Tibial artery (tissue), 4 donors: ENCODE measurements at regions of chr1 and their contacts with region 1.

Region 1: GRCh38 chr1:167721617-167722151 is at the start of gene MPZL1:
- DNase-seq: peak; percentile 96 to 98
- H3K4me3 ChIP-seq: peak within 1 kb of the TSS; percentile 79 to 84
- H3K27ac ChIP-seq: peak within 1 kb of the TSS; percentile 87
- H3K4me1 ChIP-seq: peaks cover 0 to 39% (median 13%) of the 10 kb centered on the region in 4 donors
- H3K27me3 ChIP-seq: no peaks in the 10 kb centered on the region
- CTCF ChIP-seq: no peak

Region 2: GRCh38 chr1:167687919-167688519 is 33.7 kb before region 1 on chr1:
- intact Hi-C with region 1: no loop called
- DNase-seq: peak in 1 of 2 donors; percentile 80
- H3K4me3 ChIP-seq: no peak overlapping the region
- H3K27ac ChIP-seq: no peak overlapping the region
- H3K4me1 ChIP-seq: peaks cover 0 to 35% (median 21%) of the 10 kb centered on the region in 4 donors
- H3K27me3 ChIP-seq: no peaks in the 10 kb centered on the region
- CTCF ChIP-seq: peak; percentile 87 to 91

Region 3: GRCh38 chr1:167737169-167737568 is 15.5 kb after region 1 on chr1:
- intact Hi-C with region 1: no loop called
- DNase-seq: no peak
- H3K4me3 ChIP-seq: no peak overlapping the region
- H3K27ac ChIP-seq: no peak overlapping the region
- H3K4me1 ChIP-seq: peaks cover 0 to 7% (median 3%) of the 10 kb centered on the region in 4 donors
- H3K27me3 ChIP-seq: no peaks in the 10 kb centered on the region
- CTCF ChIP-seq: no peak

Region 4: DNA sequence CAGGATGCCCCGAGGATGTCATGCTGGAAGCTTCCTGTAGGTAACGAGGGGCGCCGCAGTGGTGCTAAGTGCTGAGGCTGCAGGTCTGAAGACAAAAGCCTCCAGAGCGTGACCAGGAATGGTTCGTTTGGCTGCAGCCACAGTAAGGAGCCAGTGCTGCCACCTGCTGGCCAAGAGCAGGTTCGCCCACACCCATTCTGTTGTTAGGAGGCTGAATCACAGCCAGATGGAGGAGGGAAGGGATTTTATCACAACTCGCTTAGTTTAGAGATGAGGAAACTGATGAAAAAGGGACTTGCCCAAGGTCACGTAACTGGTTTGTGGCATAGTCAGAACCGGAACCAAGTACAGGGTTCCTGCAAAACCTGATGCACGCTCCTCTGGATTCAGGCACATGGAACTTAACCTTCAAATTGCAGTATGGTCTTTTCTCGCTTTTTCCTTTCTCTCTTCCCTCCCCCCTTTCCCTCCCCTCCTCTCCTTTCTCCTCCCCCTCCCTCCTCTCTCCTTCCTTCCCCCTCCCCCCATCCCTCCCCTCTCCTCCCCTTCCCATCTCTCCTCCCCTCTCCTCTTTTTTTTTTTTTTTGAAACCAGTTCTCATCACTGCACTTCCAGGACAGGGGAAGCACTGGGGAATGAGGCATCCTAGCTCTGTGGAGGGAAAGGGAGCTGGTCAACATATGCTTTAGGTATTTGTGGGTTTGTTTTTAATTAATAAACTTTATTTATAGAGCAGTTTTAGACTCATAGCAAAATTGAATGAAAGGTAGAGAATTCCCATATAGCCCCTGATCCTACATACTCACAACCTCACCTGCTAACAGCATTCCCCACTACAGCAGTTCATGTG is 81.9 kb after region 1 on chr1:
- intact Hi-C with region 1: loop called (anchors 5 kb)
- DNase-seq: peak; percentile 93 to 95
- H3K4me3 ChIP-seq: no peak overlapping the region
- H3K27ac ChIP-seq: no peak overlapping the region
- H3K4me1 ChIP-seq: peaks cover 0 to 9% (median 5%) of the 10 kb centered on the region in 4 donors
- H3K27me3 ChIP-seq: no peaks in the 10 kb centered on the region
- CTCF ChIP-seq: peak; percentile 89 to 92

Region 5: GRCh38 chr1:167936068-167936929 is 214.6 kb after region 1 on chr1 and contains the start of gene DCAF6:
- intact Hi-C with region 1: loop called (anchors 10 kb)
- DNase-seq: peak; percentile 98 to 99
- H3K4me3 ChIP-seq: peak within 1 kb of the TSS; percentile 92 to 99
- H3K27ac ChIP-seq: peak within 1 kb of the TSS; percentile 99 to 100
- H3K4me1 ChIP-seq: peaks cover 0 to 65% (median 19%) of the 10 kb centered on the region in 4 donors
- H3K27me3 ChIP-seq: no peaks in the 10 kb centered on the region
- CTCF ChIP-seq: no peak